Mammary epithelial cell (primary cell): ENCODE measurements at regions of chr2 and their contacts with region 1.

Region 1: DNA sequence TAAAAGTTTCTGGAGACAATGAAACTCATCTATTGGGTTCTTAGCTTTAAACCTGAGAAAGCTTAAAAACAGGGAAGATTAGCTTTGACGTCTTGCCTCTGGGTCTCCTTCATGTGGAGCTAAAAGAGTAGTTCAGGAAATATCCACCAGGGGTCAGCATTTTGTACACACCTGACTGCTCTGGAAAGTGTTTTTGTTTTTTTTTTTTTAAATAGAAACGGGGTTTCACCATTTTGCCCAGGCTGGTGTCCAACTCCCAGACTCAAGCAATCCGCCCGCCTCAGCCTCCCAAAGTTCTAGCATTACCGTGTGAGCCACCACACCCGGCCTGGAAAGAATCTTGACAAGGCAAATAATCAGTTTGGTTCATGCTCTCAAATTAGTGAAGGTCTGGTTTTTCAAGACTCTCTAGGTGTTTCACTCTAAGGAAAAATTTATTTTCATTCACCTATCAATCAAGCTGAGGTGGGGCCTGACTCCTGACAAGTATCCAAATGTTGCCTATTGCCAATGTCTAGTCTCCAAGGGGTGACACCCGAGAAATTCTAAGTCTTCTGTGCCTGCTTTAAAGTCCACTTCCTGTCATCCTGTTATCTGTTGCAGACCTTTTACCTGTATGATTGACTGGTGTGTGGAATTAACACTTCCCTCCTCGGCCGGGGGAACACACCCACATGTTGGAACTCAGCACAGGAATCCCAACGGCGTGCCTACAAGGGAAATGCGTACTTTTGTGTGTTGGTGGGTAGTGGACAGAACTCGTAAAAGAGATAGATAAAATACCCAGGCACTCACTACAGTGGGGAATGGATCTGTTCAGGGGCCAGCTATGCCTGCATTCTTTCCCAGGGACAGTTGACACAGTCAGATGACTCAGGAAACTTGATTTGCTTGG is 11.3 kb downstream of the IL1RN start:
- DNase-seq: peak; percentile 66
- H3K4me3 ChIP-seq: no peak overlapping the region
- H3K27ac ChIP-seq: no peak overlapping the region
- H3K4me1 ChIP-seq: peaks cover 9% of the 10 kb centered on the region
- H3K27me3 ChIP-seq: no peaks in the 10 kb centered on the region
- CTCF ChIP-seq: peak; percentile 61 to 70

Region 2: DNA sequence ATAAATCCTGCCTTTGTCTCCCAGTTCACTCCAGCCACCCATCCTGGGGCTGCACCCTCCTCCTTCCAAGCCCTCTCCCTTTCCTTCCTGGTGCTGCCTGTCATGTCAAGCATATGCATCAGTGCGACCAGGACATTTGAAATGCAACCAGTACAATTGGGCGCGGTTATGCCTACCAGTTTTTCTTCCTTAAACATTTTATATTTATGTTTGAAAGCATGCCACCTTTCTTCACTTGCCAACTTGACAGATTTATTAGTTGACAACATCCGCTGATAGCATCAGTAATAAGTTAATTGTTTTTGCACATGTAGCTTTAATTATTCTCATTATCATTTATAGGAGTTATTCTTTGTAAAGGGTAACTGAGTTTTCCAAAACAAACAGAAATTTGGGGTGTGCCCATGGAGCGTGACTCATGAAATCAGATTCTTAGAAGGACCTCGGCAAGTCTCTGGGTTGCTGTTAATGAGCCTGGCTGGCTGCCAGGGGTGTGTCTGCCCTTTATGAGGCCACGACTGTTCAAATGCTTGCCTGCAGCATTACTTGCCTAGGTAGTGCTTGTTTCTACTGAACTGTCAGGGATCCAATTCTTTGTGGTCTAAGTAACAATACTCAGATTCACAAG is 269.3 kb before region 1 on chr2:
- CTCF ChIA-PET with region 1: no interaction called
- dilution Hi-C with region 1: no loop called
- in situ Hi-C with region 1: no loop called
- intact Hi-C with region 1: no loop called
- DNase-seq: peak; percentile 99
- H3K4me3 ChIP-seq: no peak overlapping the region
- H3K27ac ChIP-seq: peak overlapping the region; percentile 88
- H3K4me1 ChIP-seq: peaks cover 42% of the 10 kb centered on the region
- H3K27me3 ChIP-seq: no peaks in the 10 kb centered on the region
- CTCF ChIP-seq: no peak

Region 3: GRCh38 chr2:113041871-113042508 is 96.7 kb before region 1 on chr2:
- CTCF ChIA-PET with region 1: no interaction called
- dilution Hi-C with region 1: no loop called
- in situ Hi-C with region 1: no loop called
- intact Hi-C with region 1: loop called (anchors 1 kb)
- DNase-seq: peak; percentile 33
- H3K4me3 ChIP-seq: no peak overlapping the region
- H3K27ac ChIP-seq: no peak overlapping the region
- H3K4me1 ChIP-seq: no peaks in the 10 kb centered on the region
- H3K27me3 ChIP-seq: no peaks in the 10 kb centered on the region
- CTCF ChIP-seq: peak; percentile 61 to 83

Region 4: DNA sequence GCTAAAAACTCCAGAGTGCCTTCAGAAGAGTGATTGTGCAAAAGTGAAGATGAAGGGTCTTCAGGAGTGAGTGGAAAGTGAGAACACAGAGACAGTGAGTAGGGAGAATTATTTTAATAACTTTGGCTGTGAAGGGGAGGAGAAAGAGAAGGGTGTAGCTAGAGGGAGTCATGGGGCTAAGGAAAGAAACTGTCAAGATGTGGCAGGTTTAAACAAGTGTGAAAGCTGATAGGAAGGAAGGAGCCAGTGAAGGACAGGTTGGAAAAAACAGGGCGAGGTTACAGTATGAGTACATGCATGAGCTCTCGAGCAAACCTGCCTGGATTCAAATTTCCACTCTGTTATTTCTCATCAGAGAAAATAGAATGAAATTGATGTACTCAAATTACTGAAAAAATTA is 53.1 kb before region 1 on chr2:
- CTCF ChIA-PET with region 1: interaction called, 7 read pairs
- dilution Hi-C with region 1: no loop called
- in situ Hi-C with region 1: loop called in 1 of 2 experiments (anchors 10 kb)
- intact Hi-C with region 1: loop called (anchors 1 kb)
- DNase-seq: peak; percentile 92
- H3K4me3 ChIP-seq: no peak overlapping the region
- H3K27ac ChIP-seq: peak overlapping the region; percentile 59
- H3K4me1 ChIP-seq: peaks cover 22% of the 10 kb centered on the region
- H3K27me3 ChIP-seq: no peaks in the 10 kb centered on the region
- CTCF ChIP-seq: peak in 1 of 2 donors; percentile 19

Region 5: DNA sequence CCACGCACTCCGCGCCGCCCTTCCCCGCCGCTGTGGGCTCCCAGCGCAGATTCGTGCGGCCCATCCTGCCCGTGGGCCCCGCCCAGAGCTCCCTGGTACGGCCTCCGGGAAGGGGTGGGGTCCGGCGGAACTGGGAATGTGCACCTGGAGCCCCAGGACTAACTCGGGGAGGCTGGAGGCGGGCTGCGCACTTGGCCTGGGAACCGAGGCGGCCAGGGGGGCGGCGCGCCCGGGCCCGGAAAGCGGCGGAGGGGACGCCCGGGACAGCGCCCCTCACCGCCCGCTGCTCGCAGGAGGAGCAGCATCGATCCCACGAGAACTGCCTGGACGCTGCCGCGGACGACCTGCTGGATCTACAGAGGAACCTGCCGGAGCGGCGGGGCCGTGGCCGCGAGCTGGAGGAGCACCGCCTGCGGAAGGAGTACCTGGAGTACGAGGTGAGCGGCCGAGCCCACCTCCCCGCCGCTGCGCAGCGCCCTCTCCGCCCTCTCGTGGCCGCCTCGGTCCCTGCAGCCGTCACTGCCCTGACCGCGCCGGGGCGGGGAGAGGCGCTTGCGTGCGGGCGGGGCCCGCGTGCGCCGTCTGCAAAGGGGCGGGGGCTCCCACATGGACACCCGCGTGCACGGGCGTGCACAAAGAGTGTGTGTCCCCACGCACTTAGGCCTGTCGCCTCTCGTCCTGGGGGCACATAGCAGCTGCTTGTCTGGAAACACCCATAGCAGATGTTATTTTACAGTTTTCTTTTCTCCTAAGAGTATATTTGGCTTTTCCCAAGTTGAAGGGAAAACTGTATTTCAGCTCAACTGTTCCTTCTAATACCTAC is 60.3 kb after region 1 on chr2:
- CTCF ChIA-PET with region 1: interaction called, 17 read pairs
- dilution Hi-C with region 1: loop called (anchors 5 kb)
- in situ Hi-C with region 1: loop called (anchors 5 to 10 kb)
- intact Hi-C with region 1: loop called (anchors 1 kb)
- DNase-seq: peak; percentile 89
- H3K4me3 ChIP-seq: peak overlapping the region; percentile 59 to 69 (median 65)
- H3K27ac ChIP-seq: peak overlapping the region; percentile 73
- H3K4me1 ChIP-seq: peaks cover 39% of the 10 kb centered on the region
- H3K27me3 ChIP-seq: no peaks in the 10 kb centered on the region
- CTCF ChIP-seq: peak; percentile 70 to 85

Region 6: DNA sequence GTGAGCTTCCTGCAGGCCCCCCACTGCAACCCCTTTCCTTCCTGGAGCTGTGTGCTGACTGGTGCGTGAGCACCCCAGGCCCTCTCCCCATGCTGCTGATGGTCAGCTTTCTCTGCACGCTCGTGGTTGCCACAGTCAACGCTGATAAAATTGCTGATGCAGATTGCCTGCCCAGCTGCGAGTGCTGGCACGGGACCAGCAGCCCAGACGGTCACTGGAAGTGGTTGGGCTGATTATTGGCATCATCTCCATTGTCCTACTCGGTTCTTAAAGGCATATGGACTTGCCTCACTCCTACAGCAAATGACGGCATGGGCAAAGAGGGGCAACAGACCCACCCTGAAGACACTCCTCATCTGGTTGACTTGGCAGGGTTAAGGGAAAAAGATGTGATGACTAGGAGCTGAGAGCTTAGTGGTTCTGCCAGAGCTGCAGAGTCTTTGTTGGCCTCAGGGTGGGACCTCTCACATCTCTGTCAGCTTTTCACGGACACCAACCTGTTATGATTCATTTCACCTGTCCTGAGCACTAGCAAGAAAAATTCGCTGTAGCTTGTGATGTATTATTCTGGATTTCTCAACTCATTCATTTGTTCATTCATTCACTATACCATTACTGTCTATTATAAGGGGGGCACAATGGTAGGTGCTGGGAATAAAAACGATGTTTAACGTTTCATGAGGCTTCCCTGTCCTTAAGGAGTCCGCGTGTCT is 101.6 kb after region 1 on chr2:
- CTCF ChIA-PET with region 1: interaction called, 6 read pairs
- dilution Hi-C with region 1: no loop called
- in situ Hi-C with region 1: no loop called
- intact Hi-C with region 1: loop called (anchors 2 kb)
- DNase-seq: peak; percentile 95
- H3K4me3 ChIP-seq: peak overlapping the region in 2 of 3 experiments; percentile 2 to 12
- H3K27ac ChIP-seq: peak overlapping the region; percentile 95
- H3K4me1 ChIP-seq: peaks cover 29% of the 10 kb centered on the region
- H3K27me3 ChIP-seq: no peaks in the 10 kb centered on the region
- CTCF ChIP-seq: peak; percentile 16 to 19

Region 7: DNA sequence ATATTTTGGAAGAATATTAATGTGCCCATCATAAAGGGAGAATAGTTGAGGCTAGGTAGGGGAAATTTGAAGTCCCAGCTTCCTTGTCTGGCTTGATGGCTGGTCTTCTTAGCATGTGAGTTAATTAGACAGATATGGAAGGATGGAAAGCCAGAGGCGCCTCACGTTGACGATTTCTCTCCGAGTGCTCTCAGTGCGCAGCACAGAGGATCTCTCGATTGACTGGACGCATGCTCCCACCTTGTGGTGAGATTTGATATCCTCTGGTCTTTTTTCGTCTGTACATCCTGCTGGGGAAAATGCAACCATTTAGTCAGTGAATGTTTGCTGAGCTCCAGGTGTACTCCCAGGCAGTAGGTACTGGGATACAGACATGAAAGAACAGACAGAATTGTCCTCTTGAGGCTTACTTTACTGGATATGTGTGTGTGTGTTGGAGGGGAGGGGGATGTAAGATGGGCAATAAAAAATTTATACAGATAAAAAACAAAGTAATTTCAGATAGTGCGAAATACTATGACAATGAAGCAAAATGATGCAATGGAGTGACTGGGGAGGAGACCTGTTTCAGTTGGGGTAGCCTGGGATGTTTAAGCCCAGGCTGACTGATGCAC is 231.9 kb after region 1 on chr2:
- CTCF ChIA-PET with region 1: no interaction called
- dilution Hi-C with region 1: loop called (anchors 25 kb)
- in situ Hi-C with region 1: no loop called
- intact Hi-C with region 1: loop called (anchors 1 kb)
- DNase-seq: peak; percentile 74
- H3K4me3 ChIP-seq: no peak overlapping the region
- H3K27ac ChIP-seq: no peak overlapping the region
- H3K4me1 ChIP-seq: peaks cover 6% of the 10 kb centered on the region
- H3K27me3 ChIP-seq: no peaks in the 10 kb centered on the region
- CTCF ChIP-seq: peak; percentile 49 to 71